Dorsolateral prefrontal cortex (tissue), 120 donors: ENCODE measurements at regions of chr6 and their contacts with region 1.

Region 1: GRCh38 chr6:33082702-33083101 is 6.9 kb downstream of the HLA-DPB1 start:
- DNase-seq: no peak
- H3K4me3 ChIP-seq: no peak overlapping the region
- H3K27ac ChIP-seq: peak overlapping the region in 4 of 59 donors; percentile 20 to 53 (median 33)
- H3K27me3 ChIP-seq: peaks cover 0 to 29% (median 0%) of the 10 kb centered on the region in 45 donors
- CTCF ChIP-seq: peak in 42 of 56 donors; percentile 16 to 72 (median 54)

Region 2: GRCh38 chr6:33014841-33015634 is 67.7 kb before region 1 on chr6:
- intact Hi-C with region 1: loop called (anchors 2 to 5 kb)
- DNase-seq: peak in 2 of 10 donors; percentile 44 to 63
- H3K4me3 ChIP-seq: no peak overlapping the region
- H3K27ac ChIP-seq: peak overlapping the region in 1 of 59 donors; percentile 3
- H3K27me3 ChIP-seq: peaks cover 0 to 28% (median 3%) of the 10 kb centered on the region in 45 donors
- CTCF ChIP-seq: peak; percentile 77 to 98 (median 90)

Region 3: DNA sequence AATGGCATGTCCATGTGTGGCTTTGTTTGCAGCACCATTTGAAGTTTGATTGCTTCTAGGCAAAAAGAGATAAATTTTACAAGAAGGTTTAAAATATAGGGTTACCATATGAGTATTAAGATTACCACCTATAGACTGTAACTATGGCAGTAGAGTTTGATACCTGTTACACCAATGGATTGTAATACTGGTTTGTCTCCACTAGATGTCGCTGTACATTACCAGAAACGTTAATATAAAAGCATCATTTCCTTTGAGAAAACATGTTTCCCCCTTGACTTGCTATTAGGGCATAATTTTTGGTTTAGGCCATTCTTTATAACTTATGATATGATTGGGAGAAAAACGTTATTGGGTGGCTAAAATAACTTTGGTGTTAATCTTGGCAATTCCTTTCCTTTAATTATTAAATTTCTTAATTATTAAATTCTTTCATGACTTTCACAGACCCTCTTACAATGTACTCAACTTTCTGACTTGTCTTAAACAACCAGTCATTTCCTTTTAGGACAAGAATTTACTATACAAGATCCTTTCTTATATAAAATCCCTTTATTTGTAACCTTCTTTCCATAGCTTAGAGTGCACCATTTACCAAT is 35.9 kb after region 1 on chr6:
- intact Hi-C with region 1: no loop called
- DNase-seq: no peak
- H3K4me3 ChIP-seq: peak overlapping the region in 6 of 59 donors; percentile 47 to 59 (median 54)
- H3K27ac ChIP-seq: no peak overlapping the region
- H3K27me3 ChIP-seq: peaks cover 0 to 42% (median 25%) of the 10 kb centered on the region in 45 donors
- CTCF ChIP-seq: peak; percentile 73 to 97 (median 91)

Region 4: DNA sequence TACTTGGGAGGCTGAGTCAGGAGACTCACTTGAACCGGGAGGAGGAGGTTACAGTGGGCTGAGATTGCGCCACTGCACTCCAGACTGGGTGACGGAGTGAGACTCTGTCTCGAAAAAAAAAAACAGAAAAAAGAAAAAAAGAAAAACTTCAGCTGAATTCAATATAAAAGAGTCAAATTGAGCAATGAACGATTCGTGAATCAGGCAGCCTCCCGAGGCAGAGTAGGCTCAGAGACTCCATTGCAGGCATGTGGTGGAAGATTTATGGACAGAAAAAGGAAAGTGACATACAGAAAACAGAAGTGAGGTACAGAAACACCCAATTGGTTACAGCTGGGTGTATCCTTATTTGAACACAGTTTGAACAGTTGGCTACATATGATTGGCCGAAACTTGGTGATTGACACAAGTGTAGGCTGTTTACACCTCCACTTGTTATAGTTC is 49.4 kb after region 1 on chr6:
- intact Hi-C with region 1: no loop called
- DNase-seq: no peak
- H3K4me3 ChIP-seq: no peak overlapping the region
- H3K27ac ChIP-seq: no peak overlapping the region
- H3K27me3 ChIP-seq: peaks cover 0 to 6% (median 0%) of the 10 kb centered on the region in 45 donors
- CTCF ChIP-seq: no peak